Dorsolateral prefrontal cortex (tissue), 120 donors: ENCODE measurements at regions of chr1 and their contacts with region 1.

Region 1: GRCh38 chr1:33472349-33472980 is at the start of gene ZSCAN20:
- DNase-seq: peak; percentile 99 to 100 (median 99)
- H3K4me3 ChIP-seq: peak within 1 kb of the TSS; percentile 49 to 86 (median 72)
- H3K27ac ChIP-seq: peak within 1 kb of the TSS in 57 of 59 donors; percentile 3 to 92 (median 78)
- H3K27me3 ChIP-seq: no peaks in the 10 kb centered on the region
- CTCF ChIP-seq: peak in 48 of 56 donors; percentile 16 to 70 (median 42)
- total RNA-seq, gene ZSCAN20: 4.8 to 12.9 (median 8.1) TPM

Region 2: DNA sequence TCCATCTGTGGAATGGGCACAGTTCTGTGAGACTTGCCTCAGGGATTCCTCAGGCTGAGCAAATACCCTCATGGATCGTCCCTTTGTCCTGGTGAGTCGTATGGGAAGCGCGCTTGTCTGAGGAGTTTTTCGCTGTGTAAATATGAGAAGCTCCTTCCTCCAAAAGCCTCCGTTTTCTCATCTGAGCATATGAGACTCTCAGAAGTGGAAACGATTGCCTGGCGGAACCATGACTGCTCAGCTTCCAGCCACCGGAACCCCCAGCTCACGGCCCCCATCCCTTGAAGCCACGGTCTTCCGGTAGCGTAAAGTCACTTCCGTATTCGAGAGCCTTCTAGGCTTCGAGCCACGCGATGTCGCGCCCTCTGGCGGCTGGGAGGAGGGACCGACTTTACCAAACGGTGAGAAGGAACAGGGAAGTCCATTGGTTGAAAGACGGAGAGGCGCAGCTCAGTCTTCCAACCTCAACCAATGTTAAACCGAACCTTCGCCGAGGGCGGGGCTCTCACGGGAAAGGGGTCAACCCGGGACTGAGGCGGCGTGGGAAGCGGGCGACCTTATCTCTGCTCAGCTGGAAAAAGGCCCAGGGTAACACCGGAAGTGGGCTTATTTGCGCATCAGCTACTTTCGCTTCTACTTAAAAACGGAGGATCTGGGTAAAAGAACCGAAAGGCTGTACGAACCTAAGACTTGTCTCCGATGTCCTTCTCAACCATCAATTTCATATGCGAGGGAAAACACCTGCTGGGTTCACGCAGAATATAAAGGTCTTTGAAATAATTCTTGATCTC is 345.3 kb before region 1 on chr1:
- intact Hi-C with region 1: loop called (anchors 5 kb)
- DNase-seq: peak; percentile 92 to 98 (median 97)
- H3K4me3 ChIP-seq: peak overlapping the region; percentile 57 to 96 (median 80)
- H3K27ac ChIP-seq: peak overlapping the region; percentile 71 to 97 (median 90)
- H3K27me3 ChIP-seq: no peaks in the 10 kb centered on the region
- CTCF ChIP-seq: peak; percentile 88 to 99 (median 96)

Region 3: GRCh38 chr1:33295450-33296081 is 176.9 kb before region 1 on chr1:
- intact Hi-C with region 1: loop called (anchors 2 kb)
- DNase-seq: peak; percentile 82 to 94 (median 91)
- H3K4me3 ChIP-seq: peak overlapping the region in 1 of 59 donors; percentile 14
- H3K27ac ChIP-seq: peak overlapping the region in 41 of 59 donors; percentile 0 to 72 (median 51)
- H3K27me3 ChIP-seq: no peaks in the 10 kb centered on the region
- CTCF ChIP-seq: peak; percentile 90 to 100 (median 96)

Region 4: DNA sequence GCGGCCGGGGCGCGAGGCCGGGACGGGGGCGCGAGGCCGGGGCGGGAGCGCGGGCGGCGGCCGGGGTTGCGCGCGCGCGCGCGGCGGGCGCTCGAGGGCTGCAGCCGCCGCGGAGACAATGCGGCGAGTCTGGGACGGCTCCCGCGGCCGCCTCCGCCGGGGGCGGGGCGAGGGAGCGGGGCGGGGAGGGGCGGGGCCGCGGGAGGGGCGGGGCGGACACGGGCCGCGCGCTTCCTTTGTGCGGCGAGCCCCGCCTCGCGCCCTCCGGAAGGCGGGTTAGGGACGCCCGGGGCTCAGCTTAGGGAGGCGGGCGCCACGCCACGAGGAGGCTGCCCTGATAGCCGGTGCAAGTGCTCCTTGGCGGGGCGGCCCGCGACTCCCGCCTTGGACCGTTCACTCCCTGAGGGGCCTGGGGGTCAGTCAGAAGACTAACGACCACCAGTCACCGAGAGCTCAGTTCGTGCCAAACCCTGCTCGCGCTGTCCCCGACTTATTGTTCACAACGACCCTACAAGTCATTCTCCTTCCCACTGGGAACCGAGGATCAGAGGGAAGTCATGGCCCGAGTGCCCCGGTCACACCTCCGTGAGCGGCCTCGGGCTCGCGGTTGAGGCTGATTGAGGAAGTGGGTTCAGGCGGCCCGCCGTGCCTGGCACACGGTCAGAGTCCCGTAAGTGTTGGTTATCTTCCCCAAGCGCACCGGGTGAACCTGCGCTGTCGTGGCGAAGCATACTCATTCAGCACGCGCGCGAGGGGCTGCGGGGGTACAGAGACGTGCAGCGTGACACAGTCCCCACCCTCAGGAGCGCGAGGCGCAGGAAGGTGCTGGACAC is 122.5 kb before region 1 on chr1:
- intact Hi-C with region 1: loop called in 1 of 2 experiments (anchors 5 kb)
- DNase-seq: peak; percentile 70 to 88 (median 80)
- H3K4me3 ChIP-seq: peak overlapping the region; percentile 41 to 94 (median 75)
- H3K27ac ChIP-seq: peak overlapping the region; percentile 59 to 99 (median 92)
- H3K27me3 ChIP-seq: no peaks in the 10 kb centered on the region
- CTCF ChIP-seq: peak in 22 of 56 donors; percentile 4 to 34 (median 14)

Region 5: DNA sequence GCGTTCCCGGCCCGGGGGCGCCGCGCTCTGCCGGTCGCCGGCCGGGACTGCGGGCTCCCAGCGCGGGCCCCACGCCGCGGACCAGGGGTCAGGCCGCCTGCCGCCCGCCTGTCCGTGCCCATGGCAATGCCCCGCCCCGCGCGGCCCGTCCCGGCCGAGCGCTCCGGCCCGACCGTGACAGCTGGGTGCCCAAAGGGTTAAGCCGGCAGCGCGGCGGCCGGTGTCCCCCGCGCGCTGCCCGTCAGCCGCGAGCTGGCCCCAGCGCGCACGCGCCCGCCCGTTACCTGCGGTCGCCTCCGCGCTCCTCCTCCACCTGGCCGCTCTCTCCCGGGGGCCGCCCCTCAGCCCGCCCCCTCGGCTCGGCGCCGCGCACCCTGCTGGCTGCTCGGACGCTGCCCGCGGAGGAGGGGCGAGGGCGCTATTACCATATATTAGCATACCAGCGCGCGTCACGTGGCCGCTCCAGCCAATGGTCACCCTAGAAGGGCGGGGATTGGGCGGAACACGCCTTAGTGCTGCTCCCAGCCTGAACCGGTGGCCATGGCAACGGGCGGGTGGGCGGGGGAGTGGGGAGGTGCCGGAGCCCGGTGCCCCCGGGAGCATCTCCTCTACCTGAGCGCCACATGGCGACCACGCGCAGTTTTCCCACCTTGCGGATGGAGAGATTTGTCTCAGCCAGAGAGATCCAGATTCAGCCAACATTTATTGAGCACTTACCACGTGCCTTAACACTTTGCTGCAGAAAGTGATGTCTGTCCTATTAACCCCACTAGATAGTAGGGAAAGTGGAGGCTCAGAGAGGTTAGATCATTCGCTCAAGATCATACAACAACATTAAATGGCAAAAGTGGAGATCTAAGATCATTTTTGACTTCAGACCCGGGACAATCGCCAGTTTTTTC is 41.5 kb before region 1 on chr1 and contains the start of gene PHC2:
- intact Hi-C with region 1: loop called (anchors 5 kb)
- DNase-seq: peak; percentile 99 to 100 (median 100)
- H3K4me3 ChIP-seq: peak within 1 kb of the TSS; percentile 36 to 92 (median 81)
- H3K27ac ChIP-seq: peak within 1 kb of the TSS in 55 of 59 donors; percentile 7 to 91 (median 74)
- H3K27me3 ChIP-seq: no peaks in the 10 kb centered on the region
- CTCF ChIP-seq: peak in 53 of 56 donors; percentile 14 to 72 (median 47)
- total RNA-seq, gene PHC2: 68.2 to 158 (median 93.1) TPM